Mammary epithelial cell (primary cell): ENCODE measurements at regions of chr1 and their contacts with region 1.

Region 1: DNA sequence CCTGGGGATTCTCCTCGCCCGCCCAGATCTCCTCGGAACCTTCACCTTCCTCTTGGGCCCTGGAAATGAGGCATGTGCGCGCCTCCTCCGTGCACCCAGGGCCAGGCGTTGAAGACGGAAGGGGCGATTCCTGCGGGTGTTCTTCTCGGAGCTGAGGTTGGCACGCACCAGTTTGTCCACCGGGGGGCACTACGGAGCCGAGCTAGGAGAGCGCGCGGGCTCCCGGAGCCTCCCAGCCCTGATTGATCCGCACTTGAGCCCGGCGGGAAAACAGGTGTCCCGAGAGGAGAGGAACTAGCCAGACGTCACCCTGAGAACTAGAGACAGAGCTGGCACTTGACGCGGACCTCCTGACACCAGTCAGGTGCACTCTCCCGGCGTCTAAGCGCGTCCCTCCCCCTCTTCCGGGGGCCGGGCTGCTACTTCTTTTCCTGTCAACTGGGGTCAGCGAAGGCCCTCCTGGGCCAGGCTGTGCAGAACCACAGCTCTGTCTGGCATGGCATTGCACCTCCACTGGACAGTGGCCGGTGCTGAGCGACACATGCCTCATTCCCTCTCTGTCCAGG is 18.3 kb upstream of the SERINC2 start:
- DNase-seq: peak; percentile 87
- H3K4me3 ChIP-seq: no peak overlapping the region
- H3K27ac ChIP-seq: no peak overlapping the region
- H3K4me1 ChIP-seq: peaks cover 42% of the 10 kb centered on the region
- H3K27me3 ChIP-seq: no peaks in the 10 kb centered on the region
- CTCF ChIP-seq: peak; percentile 83 to 95

Region 2: GRCh38 chr1:31196685-31197084 is 198.0 kb before region 1 on chr1:
- CTCF ChIA-PET with region 1: no interaction called
- dilution Hi-C with region 1: no loop called
- in situ Hi-C with region 1: no loop called
- intact Hi-C with region 1: no loop called
- DNase-seq: peak; percentile 82
- H3K4me3 ChIP-seq: no peak overlapping the region
- H3K27ac ChIP-seq: no peak overlapping the region
- H3K4me1 ChIP-seq: peaks cover 3% of the 10 kb centered on the region
- H3K27me3 ChIP-seq: no peaks in the 10 kb centered on the region
- CTCF ChIP-seq: no peak

Region 3: DNA sequence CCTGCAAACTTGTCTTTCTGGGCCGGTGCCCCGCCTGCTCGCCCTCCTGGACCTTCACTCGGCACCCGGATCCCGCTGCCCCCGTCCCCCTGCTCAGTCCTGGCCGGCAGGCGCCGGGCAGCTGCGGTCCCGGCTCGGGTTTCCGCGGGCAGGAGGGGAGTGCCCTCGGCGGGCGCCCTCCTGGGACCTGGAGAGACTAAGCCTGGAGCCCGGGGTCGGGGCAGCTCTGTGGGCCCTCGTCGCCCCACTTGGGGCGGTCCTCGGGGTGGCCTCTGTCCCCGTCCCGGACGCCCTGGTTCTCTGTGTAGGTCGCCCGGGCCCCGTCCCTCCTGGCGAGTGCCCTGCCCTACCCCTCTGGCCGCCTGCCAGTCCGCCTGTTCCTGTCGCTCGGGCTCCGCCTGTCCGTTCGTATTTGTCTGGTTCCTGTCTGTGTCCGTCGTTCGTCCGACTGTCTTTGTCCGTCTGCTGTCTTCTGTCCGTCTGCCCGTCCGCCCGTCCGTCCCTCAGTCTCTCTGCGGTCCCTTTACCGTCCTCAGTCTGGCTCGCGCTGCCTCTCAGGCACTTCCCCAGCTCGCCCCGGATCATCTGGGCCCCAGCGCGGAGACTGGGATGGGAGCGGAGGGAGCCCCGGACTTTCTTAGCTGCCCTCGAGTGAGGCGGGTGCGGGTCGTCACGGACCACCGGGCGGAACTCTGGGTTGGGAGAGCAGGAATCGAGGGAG is 18.9 kb after region 1 on chr1:
- CTCF ChIA-PET with region 1: interaction called, 4 read pairs
- dilution Hi-C with region 1: no loop called
- in situ Hi-C with region 1: no loop called
- intact Hi-C with region 1: loop called (anchors 1 kb)
- DNase-seq: peak; percentile 53
- H3K4me3 ChIP-seq: peak overlapping the region; percentile 73 to 97 (median 92)
- H3K27ac ChIP-seq: peak overlapping the region; percentile 67
- H3K4me1 ChIP-seq: peaks cover 63% of the 10 kb centered on the region
- H3K27me3 ChIP-seq: no peaks in the 10 kb centered on the region
- CTCF ChIP-seq: no peak

Region 4: DNA sequence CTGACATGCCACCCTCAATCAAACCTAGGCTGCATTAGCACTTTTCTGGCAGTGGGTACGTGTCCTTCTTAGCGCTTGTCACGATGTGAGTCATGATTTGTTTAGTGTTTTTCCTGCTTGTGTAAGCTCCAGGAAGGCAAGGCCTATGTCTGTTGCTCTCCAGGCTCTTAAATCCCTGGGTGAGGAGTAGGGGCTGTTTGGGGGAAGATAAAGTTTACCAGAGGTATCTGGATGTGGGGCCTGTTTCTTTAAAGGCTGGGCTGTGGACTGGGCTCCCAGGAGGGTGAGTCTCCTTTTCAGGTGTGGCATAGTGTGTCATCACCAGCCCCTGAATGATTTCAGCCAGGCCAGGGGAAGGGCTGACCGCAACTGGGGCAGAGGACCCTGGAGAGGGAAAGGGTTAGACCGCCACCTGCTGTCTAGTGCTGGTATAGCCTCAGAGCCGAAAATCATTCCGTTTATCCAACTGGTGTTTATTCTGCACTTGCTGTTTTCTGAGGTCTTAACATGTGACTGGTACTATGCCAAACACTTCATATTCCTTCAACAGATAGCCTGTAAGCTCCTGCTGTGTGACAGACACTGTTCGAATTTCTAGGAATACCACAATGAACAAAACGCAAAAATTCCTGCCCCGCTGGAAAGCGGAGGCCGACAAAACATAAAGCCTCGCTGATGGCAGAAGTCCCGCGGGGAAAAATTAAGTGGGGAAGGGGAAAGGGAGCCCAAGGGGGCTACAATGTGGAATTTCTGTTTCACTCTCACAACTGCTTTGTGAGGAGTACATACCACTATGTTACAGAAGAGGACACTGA is 28.0 kb after region 1 on chr1:
- CTCF ChIA-PET with region 1: interaction called, 20 read pairs
- dilution Hi-C with region 1: no loop called
- in situ Hi-C with region 1: loop called in 1 of 2 experiments (anchors 5 kb)
- intact Hi-C with region 1: loop called (anchors 1 kb)
- DNase-seq: peak; percentile 95
- H3K4me3 ChIP-seq: no peak overlapping the region
- H3K27ac ChIP-seq: peak overlapping the region; percentile 85
- H3K4me1 ChIP-seq: peaks cover 86% of the 10 kb centered on the region
- H3K27me3 ChIP-seq: no peaks in the 10 kb centered on the region
- CTCF ChIP-seq: peak; percentile 96 to 98

Region 5: GRCh38 chr1:31593770-31594632 is 199.3 kb after region 1 on chr1:
- CTCF ChIA-PET with region 1: interaction called, 3 read pairs
- dilution Hi-C with region 1: no loop called
- in situ Hi-C with region 1: no loop called
- intact Hi-C with region 1: loop called (anchors 1 kb)
- DNase-seq: peak; percentile 73
- H3K4me3 ChIP-seq: no peak overlapping the region
- H3K27ac ChIP-seq: no peak overlapping the region
- H3K4me1 ChIP-seq: peaks cover 13% of the 10 kb centered on the region
- H3K27me3 ChIP-seq: no peaks in the 10 kb centered on the region
- CTCF ChIP-seq: peak; percentile 96 to 97